ENCODE measurements at regions of chr1 and their contacts with region 1.

Region 1: DNA sequence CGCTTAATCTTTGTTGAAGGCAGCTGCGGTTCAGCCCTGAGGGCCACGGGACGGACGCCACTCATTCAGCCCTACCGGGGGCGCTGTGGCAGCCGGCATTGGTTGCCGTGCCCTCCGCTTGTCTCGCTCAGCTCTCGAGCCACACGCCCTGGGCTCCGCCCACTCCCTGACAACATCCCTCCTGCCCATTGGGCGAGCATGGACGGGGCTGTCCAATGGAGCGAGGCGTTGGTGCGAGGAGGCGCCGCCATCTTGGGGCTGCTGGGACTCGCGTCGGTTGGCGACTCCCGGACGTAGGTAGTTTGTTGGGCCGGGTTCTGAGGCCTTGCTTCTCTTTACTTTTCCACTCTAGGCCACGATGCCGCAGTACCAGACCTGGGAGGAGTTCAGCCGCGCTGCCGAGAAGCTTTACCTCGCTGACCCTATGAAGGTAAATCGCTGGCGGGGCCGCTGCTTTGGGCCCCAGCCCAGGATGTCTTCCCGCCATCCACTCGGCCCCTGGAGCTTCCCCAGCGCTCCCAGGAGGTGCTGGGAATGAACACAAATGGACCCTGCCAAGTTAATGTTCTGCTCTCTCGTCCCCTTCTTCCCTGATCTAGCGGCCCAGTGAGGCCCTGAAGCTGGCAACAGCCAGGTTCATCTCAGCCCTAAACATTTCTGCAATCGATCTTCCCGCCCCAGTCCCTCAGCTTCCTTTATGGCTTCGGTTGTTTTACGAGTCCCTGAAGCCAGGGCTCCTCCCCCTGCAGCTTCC is at the start of gene SRP9:
- DNase-seq: peak; percentile 100
- H3K4me3 ChIP-seq: peak within 1 kb of the TSS; percentile 71
- H3K27ac ChIP-seq: peak within 1 kb of the TSS; percentile 91
- H3K4me1 ChIP-seq: peaks cover 35% of the 10 kb centered on the region
- H3K27me3 ChIP-seq: no peaks in the 10 kb centered on the region
- CTCF ChIP-seq: peak; percentile 97
- total RNA-seq, gene SRP9: 486 and 491 TPM in 2 replicates

Region 2: GRCh38 chr1:225474986-225475820 is 302.6 kb before region 1 on chr1:
- CTCF ChIA-PET with region 1: interaction called, 12 read pairs
- POLR2A ChIA-PET with region 1: no interaction called
- intact Hi-C with region 1: loop called (anchors 1 kb)
- DNase-seq: peak; percentile 74
- H3K4me3 ChIP-seq: no peak overlapping the region
- H3K27ac ChIP-seq: no peak overlapping the region
- H3K4me1 ChIP-seq: no peaks in the 10 kb centered on the region
- H3K27me3 ChIP-seq: no peaks in the 10 kb centered on the region
- CTCF ChIP-seq: peak; percentile 100

Region 3: GRCh38 chr1:225533238-225533637 is 244.5 kb before region 1 on chr1:
- CTCF ChIA-PET with region 1: no interaction called
- POLR2A ChIA-PET with region 1: no interaction called
- intact Hi-C with region 1: loop called (anchors 10 kb)
- DNase-seq: no peak
- H3K4me3 ChIP-seq: no peak overlapping the region
- H3K27ac ChIP-seq: peak overlapping the region; percentile 44
- H3K4me1 ChIP-seq: peaks cover 73% of the 10 kb centered on the region
- H3K27me3 ChIP-seq: no peaks in the 10 kb centered on the region
- CTCF ChIP-seq: no peak

Region 4: DNA sequence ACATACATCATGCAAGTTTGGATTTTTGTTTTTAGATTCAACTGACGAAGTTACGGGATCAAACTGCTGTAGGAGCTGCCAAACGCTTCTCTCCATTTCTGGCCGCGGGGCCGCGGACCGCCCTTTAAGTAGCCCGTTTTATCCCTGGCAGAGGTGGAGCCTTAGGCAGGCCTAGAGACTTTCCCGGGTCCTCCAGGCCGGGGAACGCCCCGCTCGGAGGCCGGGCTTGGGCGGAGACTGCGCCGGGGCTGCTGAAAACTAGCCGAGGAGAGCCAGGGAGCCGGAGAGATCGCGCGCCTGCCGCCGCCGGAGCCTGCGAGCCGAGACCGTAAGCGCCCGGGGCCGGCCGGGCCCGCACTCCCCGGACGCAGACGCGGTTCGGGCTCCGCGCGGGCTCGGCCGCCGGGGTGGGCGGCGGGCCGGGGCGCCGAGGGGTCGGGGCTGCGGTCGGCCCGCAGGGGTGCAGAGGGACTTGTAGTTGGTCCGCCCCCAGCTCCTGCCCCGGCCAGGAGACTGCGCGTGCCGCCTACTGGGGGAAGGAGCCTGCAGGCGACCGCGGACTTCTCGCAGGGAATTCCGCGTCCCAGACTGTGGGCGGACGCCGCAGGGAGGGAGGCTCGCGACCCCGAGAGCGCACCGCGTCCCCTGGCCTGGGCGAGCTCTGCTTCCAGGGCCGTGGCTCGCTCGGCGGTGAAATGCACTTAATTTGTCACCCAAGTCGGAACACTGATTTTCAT is 32.2 kb after region 1 on chr1 and contains the start of gene EPHX1:
- CTCF ChIA-PET with region 1: interaction called, 5 read pairs
- POLR2A ChIA-PET with region 1: no interaction called
- intact Hi-C with region 1: loop called (anchors 5 kb)
- DNase-seq: peak; percentile 94
- H3K4me3 ChIP-seq: peak within 1 kb of the TSS; percentile 63
- H3K27ac ChIP-seq: peak within 1 kb of the TSS; percentile 62
- H3K4me1 ChIP-seq: peaks cover 38% of the 10 kb centered on the region
- H3K27me3 ChIP-seq: no peaks in the 10 kb centered on the region
- CTCF ChIP-seq: peak; percentile 40; the same call in 1 of the 2 replicates
- total RNA-seq, gene EPHX1: 22.4 and 22.8 TPM in 2 replicates

Region 5: GRCh38 chr1:225977937-225978748 is 200.4 kb after region 1 on chr1:
- CTCF ChIA-PET with region 1: no interaction called
- POLR2A ChIA-PET with region 1: no interaction called
- intact Hi-C with region 1: loop called (anchors 5 kb)
- DNase-seq: no peak
- H3K4me3 ChIP-seq: no peak overlapping the region
- H3K27ac ChIP-seq: no peak overlapping the region
- H3K4me1 ChIP-seq: no peaks in the 10 kb centered on the region
- H3K27me3 ChIP-seq: no peaks in the 10 kb centered on the region
- CTCF ChIP-seq: no peak

Measured in A673 (cell line).